PC-9 (cell line): ENCODE measurements at regions of chr14 and their contacts with region 1.

Region 1: DNA sequence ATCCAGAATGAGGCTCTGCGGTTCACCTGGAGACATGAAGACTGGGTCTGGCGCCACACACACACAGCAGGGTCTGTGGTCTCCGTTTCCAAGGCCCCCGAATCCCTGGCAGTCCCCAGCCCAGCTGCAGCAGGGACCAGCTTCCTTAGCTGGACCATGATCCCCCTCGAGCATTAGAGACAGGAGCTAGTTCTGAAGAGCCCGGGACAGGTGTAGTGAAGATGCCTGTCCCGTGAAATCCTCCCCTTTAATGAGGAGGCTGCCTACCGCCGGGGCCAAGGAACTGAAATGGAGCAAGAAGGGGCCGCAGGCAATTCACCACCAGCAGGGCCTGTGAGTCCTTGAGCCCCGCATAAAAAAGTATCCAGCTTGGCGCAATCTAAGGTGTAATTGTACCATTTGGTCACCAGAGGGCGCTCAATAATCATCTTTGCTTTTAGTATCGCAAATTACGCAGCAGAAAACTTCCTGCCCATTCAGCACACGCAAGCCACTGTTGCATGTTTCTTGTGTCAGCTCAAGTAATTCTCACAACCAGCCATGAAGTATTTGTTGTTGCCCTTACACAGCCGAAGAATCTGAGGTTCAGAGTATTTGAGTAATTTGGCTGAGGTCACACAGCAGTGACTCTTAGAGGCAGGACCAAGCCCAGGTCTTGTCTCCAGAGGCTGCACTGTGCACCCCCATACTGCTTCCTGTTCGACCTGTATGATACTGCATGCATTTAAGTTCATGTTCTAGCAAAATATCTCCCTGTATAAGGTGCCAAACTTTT is 54.3 kb upstream of the PPP2R5C start:
- DNase-seq: peak; percentile 74 to 87
- H3K4me3 ChIP-seq: no peak overlapping the region
- H3K27ac ChIP-seq: peak overlapping the region; percentile 48; the same call in 1 of the 2 replicates
- H3K4me1 ChIP-seq: peaks cover 34% of the 10 kb centered on the region
- H3K27me3 ChIP-seq: no peaks in the 10 kb centered on the region
- CTCF ChIP-seq: peak; percentile 100

Region 2: GRCh38 chr14:101635749-101636560 is 71.3 kb before region 1 on chr14:
- CTCF ChIA-PET with region 1: interaction called, 11 read pairs
- POLR2A ChIA-PET with region 1: no interaction called
- intact Hi-C with region 1: no loop called
- DNase-seq: no peak
- H3K4me3 ChIP-seq: no peak overlapping the region
- H3K27ac ChIP-seq: no peak overlapping the region
- H3K4me1 ChIP-seq: no peaks in the 10 kb centered on the region
- H3K27me3 ChIP-seq: no peaks in the 10 kb centered on the region
- CTCF ChIP-seq: 0 out of 2 replicates have a peak, but pooled peaks have one; percentile 7

Region 3: DNA sequence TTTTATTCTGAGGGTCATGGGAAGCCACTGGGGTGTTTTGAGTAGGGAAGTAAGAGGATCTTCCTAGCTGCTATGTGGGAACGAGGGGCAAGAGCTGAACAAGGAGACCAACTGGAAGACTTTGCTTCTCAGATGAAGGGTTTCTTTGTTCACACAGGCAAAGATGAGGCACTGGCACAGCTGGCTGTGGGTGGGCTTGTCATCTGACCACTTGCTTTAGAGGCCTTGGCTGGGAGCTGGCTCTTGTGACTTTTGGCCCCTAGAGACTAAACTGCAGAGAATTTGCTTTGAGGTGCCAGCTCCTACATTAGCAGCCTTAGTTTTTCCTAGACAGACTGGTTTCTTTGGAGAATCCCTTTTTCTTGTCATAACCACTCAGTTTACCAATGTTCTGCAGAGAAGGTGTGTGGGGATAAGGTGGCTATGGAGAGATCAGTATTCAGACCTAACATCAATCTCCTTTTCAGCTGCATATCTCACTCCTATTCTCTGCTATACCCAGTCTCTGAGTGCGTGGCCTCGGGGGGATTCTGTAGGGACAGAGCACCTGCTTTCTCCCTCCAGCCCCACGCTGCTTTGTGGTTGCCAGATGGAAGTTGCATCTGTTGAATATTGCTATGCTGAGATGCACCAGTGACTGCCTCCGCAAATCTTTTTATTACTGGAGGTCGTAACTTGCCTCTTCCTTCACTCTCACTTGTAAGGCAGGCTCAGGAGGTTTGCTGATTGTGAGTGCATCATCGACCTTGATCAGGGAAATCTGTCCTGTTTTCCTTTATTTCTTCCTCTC is 66.9 kb after region 1 on chr14:
- CTCF ChIA-PET with region 1: interaction called, 30 read pairs
- POLR2A ChIA-PET with region 1: interaction called, 4 read pairs
- intact Hi-C with region 1: loop called (anchors 1 kb)
- DNase-seq: no peak
- H3K4me3 ChIP-seq: no peak overlapping the region
- H3K27ac ChIP-seq: no peak overlapping the region
- H3K4me1 ChIP-seq: peaks cover 37% of the 10 kb centered on the region
- H3K27me3 ChIP-seq: no peaks in the 10 kb centered on the region
- CTCF ChIP-seq: no peak

Region 4: DNA sequence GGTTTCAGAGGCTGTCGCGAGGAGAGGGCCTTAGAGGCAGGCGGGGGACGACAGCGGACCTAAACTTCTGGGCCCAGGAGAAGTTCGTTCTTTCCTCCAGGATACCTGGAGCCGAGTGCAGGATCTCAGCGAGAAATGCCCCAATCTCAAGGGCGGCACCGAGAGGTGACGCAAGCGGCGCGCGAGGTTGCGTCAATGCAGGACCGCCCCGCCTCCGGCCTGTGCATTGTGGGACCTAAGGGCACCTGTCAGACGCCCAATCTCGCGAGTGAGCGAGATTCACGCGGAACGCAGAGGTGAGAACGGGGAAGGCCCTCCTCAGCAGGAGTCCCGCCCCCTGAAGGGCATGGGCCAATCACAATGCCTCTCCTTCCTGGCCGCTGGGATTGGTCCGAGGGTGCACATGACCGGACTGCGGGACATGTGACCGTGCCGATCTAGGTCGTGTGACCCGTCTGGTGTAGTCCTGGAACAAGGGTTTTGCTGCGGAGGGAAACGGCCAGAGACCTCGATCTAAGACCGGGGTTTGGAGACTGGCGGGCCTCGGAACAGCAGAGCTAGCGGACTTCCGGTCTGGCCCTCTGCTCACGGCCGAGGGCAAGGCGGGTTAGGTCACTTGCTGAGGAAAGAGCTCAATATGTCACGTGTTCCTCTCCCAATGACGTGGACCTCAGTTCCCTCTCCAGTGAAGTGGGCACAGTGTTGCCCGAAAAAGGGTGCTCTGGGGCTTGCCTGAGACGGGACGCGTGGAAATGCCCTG is 240.8 kb after region 1 on chr14:
- CTCF ChIA-PET with region 1: interaction called, 6 read pairs
- POLR2A ChIA-PET with region 1: interaction called, 3 read pairs
- intact Hi-C with region 1: loop called (anchors 2 kb)
- DNase-seq: peak; percentile 100
- H3K4me3 ChIP-seq: peak overlapping the region; percentile 83
- H3K27ac ChIP-seq: peak overlapping the region; percentile 93
- H3K4me1 ChIP-seq: peaks cover 20% of the 10 kb centered on the region
- H3K27me3 ChIP-seq: no peaks in the 10 kb centered on the region
- CTCF ChIP-seq: no peak

Region 5: DNA sequence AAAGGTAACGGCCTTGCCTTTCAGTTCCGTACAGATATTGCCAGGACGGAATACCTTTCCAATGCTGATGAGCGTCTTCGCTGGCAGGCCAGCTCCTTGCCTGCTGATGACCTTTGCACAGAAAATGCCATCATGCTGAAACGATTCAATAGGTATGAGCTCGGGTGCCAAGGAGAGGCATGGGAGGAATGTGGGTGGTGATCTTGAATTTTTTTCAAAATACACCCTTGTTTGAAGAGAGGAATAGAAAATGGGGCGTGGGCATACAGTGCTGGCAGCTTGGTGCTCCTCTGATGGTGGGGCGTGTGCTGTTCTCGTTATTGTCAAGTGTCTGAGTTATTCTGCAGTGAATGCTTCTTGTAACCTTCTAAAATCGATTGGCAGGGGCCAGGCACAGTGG is 327.0 kb after region 1 on chr14:
- CTCF ChIA-PET with region 1: no interaction called
- POLR2A ChIA-PET with region 1: no interaction called
- intact Hi-C with region 1: no loop called
- DNase-seq: peak; percentile 95 to 99
- H3K4me3 ChIP-seq: no peak overlapping the region
- H3K27ac ChIP-seq: peak overlapping the region; percentile 56
- H3K4me1 ChIP-seq: peaks cover 38% of the 10 kb centered on the region
- H3K27me3 ChIP-seq: no peaks in the 10 kb centered on the region
- CTCF ChIP-seq: no peak

Region 6: GRCh38 chr14:102046343-102047278 is 339.4 kb after region 1 on chr14:
- CTCF ChIA-PET with region 1: no interaction called
- POLR2A ChIA-PET with region 1: no interaction called
- intact Hi-C with region 1: loop called (anchors 1 kb)
- DNase-seq: peak; percentile 98 to 100
- H3K4me3 ChIP-seq: no peak overlapping the region
- H3K27ac ChIP-seq: no peak overlapping the region
- H3K4me1 ChIP-seq: peaks cover 3% of the 10 kb centered on the region
- H3K27me3 ChIP-seq: no peaks in the 10 kb centered on the region
- CTCF ChIP-seq: peak; percentile 84

Region 7: GRCh38 chr14:102782974-102783373 is 1075.7 kb after region 1 on chr14:
- CTCF ChIA-PET with region 1: no interaction called
- POLR2A ChIA-PET with region 1: interaction called, 36 read pairs
- intact Hi-C with region 1: no loop called
- DNase-seq: no peak
- H3K4me3 ChIP-seq: no peak overlapping the region
- H3K27ac ChIP-seq: no peak overlapping the region
- H3K4me1 ChIP-seq: peaks cover 15% of the 10 kb centered on the region
- H3K27me3 ChIP-seq: no peaks in the 10 kb centered on the region
- CTCF ChIP-seq: no peak